CD4-positive, alpha-beta T cell (primary cell): ENCODE measurements at regions of chr2 and their contacts with region 1.

Region 1: DNA sequence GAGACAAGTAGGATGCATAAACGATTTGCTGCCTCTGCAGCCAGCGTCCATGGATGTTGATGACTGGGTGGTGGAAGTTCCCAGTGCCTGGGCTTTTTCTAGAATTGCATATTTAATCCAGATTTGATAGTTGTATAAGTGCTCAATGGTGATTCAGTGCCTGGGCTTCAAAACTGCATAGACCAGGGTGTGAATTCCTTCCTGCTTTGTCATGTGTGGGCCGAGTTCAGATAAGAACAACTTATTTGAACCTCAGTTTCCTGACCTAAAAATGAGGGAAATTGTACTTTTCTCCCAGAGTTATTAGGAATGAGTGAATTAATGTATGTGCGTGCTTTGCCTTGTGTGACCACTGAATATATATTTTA is 154.6 kb downstream of the WDSUB1 start:
- DNase-seq: no peak
- ATAC-seq: no peak
- H3K4me3 ChIP-seq: no peak overlapping the region
- H3K4me3 Mint-ChIP-seq: no peak overlapping the region
- H3K27ac ChIP-seq: no peak overlapping the region
- H3K27ac Mint-ChIP-seq: no peak overlapping the region
- H3K4me1 ChIP-seq: peaks cover 2% of the 10 kb centered on the region
- H3K4me1 Mint-ChIP-seq: peaks cover 4% of the 10 kb centered on the region
- H3K27me3 ChIP-seq: no peaks in the 10 kb centered on the region
- H3K27me3 Mint-ChIP-seq: no peaks in the 10 kb centered on the region
- CTCF ChIP-seq: no peak

Region 2: DNA sequence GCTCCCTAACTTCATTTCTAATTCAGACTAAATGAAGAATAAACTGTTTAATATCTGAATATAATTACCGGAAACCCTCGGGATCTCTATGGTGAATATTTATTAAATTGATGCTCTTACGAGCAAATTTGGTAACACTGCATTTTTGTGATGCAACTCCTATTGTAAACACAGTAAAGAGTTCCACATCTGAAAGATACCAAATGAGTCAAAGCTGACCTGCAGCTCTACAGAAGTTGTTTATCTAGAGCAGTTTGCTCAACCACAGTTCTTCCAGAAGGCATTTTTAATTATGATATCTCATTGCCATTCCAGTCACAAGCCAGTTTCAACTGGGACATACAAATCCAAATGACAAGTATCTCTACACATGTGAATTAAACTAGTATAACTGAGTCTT is 545.4 kb before region 1 on chr2:
- CTCF ChIA-PET with region 1: no interaction called
- POLR2A ChIA-PET with region 1: no interaction called
- intact Hi-C with region 1: no loop called
- DNase-seq: no peak
- ATAC-seq: no peak
- H3K4me3 ChIP-seq: no peak overlapping the region
- H3K4me3 Mint-ChIP-seq: no peak overlapping the region
- H3K27ac ChIP-seq: no peak overlapping the region
- H3K27ac Mint-ChIP-seq: no peak overlapping the region
- H3K4me1 ChIP-seq: no peaks in the 10 kb centered on the region
- H3K4me1 Mint-ChIP-seq: no peaks in the 10 kb centered on the region
- H3K27me3 ChIP-seq: no peaks in the 10 kb centered on the region
- H3K27me3 Mint-ChIP-seq: no peaks in the 10 kb centered on the region
- CTCF ChIP-seq: no peak

Region 3: DNA sequence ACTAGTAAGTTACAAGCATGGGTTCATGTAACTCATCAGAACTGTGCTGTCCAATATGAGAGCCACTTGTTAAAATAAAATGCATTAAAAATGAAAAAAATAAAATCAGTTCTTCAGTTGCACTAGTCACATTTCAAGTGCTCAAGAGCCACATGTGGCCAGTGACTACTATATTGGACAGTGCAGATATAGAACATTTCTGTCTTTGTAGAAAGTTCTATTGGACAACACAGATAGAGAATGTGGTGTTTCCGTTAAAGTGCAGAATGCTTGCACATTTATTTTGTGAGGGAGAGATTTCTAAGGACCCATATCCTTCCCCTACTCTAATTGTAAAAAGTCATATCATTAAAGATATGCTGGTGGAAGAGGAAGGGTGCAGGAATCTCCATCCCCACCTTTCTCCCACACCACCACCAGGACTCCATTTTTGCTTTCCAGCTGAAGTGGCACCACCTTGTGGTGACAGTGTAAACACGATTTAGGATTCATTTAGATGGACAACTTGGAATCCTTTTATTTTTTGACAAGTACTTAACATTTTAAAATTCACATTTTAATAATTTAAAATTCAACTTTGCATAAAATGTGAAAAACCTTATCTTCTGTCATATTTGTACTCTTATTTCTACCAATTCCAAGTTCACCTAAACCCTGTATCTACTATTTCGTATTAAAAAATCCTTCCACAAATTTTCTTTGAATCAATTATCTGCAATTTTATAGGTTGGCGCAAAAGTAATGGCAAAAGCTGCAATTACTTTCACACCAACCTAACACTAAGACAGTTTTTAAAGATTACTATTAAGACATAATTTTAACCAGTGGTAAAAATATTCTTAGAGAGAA is 675.5 kb after region 1 on chr2:
- CTCF ChIA-PET with region 1: no interaction called
- POLR2A ChIA-PET with region 1: no interaction called
- intact Hi-C with region 1: loop called in 1 of 2 experiments (anchors 5 kb)
- DNase-seq: peak in 4 of 14 experiments; percentile 6 to 46 (median 34)
- ATAC-seq: no peak
- H3K4me3 ChIP-seq: no peak overlapping the region
- H3K4me3 Mint-ChIP-seq: no peak overlapping the region
- H3K27ac ChIP-seq: no peak overlapping the region
- H3K27ac Mint-ChIP-seq: no peak overlapping the region
- H3K4me1 ChIP-seq: no peaks in the 10 kb centered on the region
- H3K4me1 Mint-ChIP-seq: no peaks in the 10 kb centered on the region
- H3K27me3 ChIP-seq: no peaks in the 10 kb centered on the region
- H3K27me3 Mint-ChIP-seq: no peaks in the 10 kb centered on the region
- CTCF ChIP-seq: peak; percentile 54

Region 4: GRCh38 chr2:159921752-159922404 is 790.0 kb after region 1 on chr2:
- CTCF ChIA-PET with region 1: no interaction called
- POLR2A ChIA-PET with region 1: no interaction called
- intact Hi-C with region 1: loop called in 1 of 2 experiments (anchors 10 kb)
- DNase-seq: peak; percentile 47 to 80 (median 67)
- ATAC-seq: peak; percentile 83
- H3K4me3 ChIP-seq: no peak overlapping the region
- H3K4me3 Mint-ChIP-seq: no peak overlapping the region
- H3K27ac ChIP-seq: no peak overlapping the region
- H3K27ac Mint-ChIP-seq: no peak overlapping the region
- H3K4me1 ChIP-seq: peaks cover 5% of the 10 kb centered on the region
- H3K4me1 Mint-ChIP-seq: no peaks in the 10 kb centered on the region
- H3K27me3 ChIP-seq: peaks cover 0 to 5% of the 10 kb centered on the region in 2 experiments
- H3K27me3 Mint-ChIP-seq: peaks cover 21% of the 10 kb centered on the region
- CTCF ChIP-seq: peak; percentile 77